ENCODE measurements at regions of chr15 and their contacts with region 1.

Region 1: DNA sequence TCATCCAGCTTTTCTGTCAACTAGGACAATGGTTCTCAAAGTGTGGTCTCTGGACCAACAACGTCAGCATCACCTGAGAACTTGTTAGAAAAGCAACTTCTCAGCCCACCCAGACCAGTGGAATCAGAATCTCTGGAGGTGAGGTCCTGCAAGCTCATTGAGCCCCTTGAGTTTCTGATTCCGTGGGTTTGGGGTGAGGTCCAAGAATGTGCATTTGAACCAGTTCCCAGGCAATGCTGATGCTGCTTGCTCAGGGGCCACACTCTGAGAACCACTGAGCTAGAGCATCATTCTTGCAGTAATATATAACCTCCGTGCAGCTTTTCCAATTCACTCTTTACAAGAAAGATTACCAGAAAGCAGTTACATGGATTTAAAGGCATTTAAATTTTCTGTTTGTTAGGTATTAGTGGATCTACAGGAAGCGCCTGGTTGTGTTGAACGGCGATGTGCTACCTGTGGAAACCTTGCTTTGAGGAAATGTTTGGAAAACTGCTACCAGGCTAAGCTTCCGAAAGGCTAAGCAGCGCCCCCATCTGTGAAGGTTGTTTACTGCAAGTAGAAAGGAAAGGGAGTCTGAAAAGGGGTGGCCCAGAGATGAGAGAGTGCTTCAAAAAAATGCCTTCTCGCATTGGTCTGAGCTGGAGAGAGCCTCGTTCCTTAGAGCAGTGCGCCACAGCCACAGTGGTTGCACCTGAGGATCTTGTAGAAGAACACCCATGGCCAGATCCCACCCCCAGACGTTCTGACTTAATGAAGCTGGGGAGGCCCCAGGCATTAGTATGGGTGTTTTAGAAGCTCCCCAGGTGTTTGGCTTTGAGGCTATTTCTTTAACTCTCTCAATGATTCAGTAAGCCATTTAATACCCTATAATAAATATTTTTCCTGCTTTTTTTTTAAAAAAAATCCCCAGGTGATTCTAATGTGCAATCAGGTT is 50.0 kb downstream of the RLBP1 start:
- DNase-seq: peak; percentile 37 to 84
- H3K4me3 ChIP-seq: no peak overlapping the region
- CTCF ChIP-seq: no peak
- POLR2A ChIP-seq: no peak

Region 2: DNA sequence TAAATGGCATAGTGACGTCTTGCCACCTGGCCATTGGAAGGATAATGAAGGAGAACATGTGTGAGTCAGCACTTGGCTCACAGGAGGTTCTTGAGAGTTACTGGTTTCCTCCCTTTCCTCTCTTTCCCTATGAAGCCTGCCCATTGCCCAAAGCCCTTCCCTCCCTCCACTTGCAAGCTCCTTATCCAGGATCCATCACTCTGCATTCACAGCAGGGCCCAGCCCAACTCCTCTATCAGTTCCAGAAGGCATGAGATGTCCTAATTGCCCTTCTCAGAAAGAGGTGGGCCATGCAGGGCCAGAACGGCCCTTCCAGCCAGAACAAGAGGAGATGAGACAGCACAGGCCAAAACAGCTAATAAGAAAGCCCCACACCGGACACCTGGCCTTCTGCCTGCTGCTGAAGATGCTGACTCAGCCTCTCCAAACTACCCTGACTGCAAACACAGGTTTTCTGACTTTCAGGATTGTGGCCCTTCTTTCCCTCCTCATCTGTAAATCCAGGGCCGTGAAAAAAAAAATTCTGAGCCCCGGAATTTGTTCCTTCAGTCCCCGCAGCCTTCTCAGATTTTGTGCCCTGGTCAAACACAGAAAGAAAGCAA is 305.8 kb before region 1 on chr15:
- intact Hi-C with region 1: no loop called
- DNase-seq: no peak
- H3K4me3 ChIP-seq: no peak overlapping the region
- CTCF ChIP-seq: no peak
- POLR2A ChIP-seq: no peak

Region 3: DNA sequence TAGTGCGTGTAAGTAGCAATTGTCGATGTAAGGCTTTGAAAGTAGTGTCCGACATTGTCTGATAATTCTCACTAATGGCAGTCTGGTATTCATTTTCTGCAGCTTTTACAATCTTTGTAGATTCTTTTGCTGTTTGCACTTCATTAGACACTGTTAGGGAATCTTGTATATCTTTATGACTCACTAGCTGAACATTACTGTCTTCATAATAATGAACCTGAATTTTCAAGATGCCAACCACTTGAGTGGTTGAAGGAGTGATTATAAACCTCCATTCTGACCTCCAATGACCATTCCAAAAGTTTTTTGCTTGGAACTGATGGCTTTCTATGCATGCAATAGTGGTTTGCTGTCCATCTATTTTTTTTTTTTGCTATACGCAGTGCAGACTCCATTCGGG is 181.8 kb before region 1 on chr15:
- intact Hi-C with region 1: no loop called
- DNase-seq: no peak
- H3K4me3 ChIP-seq: no peak overlapping the region
- CTCF ChIP-seq: no peak
- POLR2A ChIP-seq: no peak

Region 4: GRCh38 chr15:89057504-89058133 is 113.8 kb before region 1 on chr15:
- intact Hi-C with region 1: loop called (anchors 5 kb)
- DNase-seq: peak; percentile 80 to 97
- H3K4me3 ChIP-seq: no peak overlapping the region
- CTCF ChIP-seq: peak in 1 of 3 donors; percentile 96
- POLR2A ChIP-seq: no peak

Region 5: GRCh38 chr15:89406940-89407607 is 235.7 kb after region 1 on chr15:
- intact Hi-C with region 1: no loop called
- DNase-seq: no peak
- H3K4me3 ChIP-seq: no peak overlapping the region
- CTCF ChIP-seq: no peak
- POLR2A ChIP-seq: no peak